ENCODE measurements at regions of chr2 and their contacts with region 1.

Region 1: GRCh38 chr2:203706403-203706802 is at the start of gene CD28:
- DNase-seq: peak; percentile 88
- H3K4me3 Mint-ChIP-seq: peak within 1 kb of the TSS; percentile 89
- H3K27ac Mint-ChIP-seq: peak within 1 kb of the TSS; percentile 100
- H3K4me1 Mint-ChIP-seq: peaks cover 57% of the 10 kb centered on the region
- H3K27me3 Mint-ChIP-seq: no peaks in the 10 kb centered on the region
- total RNA-seq, gene CD28: 53.6 and 59.3 TPM in 2 replicates

Region 2: GRCh38 chr2:203484266-203485112 is 221.9 kb before region 1 on chr2:
- intact Hi-C with region 1: loop called (anchors 5 kb)
- DNase-seq: peak; percentile 33
- H3K4me3 Mint-ChIP-seq: no peak overlapping the region
- H3K27ac Mint-ChIP-seq: no peak overlapping the region
- H3K4me1 Mint-ChIP-seq: peaks cover 6% of the 10 kb centered on the region
- H3K27me3 Mint-ChIP-seq: no peaks in the 10 kb centered on the region

Region 3: DNA sequence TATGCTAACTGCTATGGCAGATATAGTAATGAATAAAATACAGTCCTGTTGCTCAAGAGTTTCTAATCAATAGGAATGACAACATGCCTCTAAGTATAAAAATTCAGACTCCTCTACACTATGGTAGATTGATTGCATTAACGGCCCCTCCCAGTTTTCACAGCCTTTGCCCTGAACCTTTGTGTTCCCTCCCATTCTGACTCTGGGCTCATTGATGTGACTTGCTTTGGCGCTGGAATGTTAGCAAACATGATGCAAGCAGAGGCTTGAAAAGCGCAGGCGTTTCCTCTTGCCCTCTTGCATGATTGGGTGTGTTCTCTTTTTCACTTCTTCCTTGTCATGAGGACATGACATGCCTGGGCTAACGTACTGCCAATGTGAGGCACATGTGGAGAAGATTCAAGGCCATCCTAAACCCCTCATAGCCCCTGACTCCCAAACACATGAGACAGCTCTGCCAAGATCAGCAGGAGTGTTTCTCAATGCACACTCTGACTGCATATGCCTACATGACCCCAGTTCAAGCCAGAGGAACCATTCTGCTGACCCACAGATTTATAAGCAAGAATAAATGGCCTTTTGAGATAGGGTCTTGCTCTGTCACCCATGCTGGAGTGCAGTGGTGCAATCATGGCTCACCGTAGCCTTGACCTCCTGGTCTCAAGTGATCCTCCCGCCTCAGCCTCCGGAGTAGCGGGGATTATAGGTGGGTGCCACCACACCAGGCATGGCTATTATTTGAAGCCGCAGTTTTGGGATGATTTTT is 49.7 kb before region 1 on chr2:
- intact Hi-C with region 1: loop called (anchors 2 kb)
- DNase-seq: no peak
- H3K4me3 Mint-ChIP-seq: no peak overlapping the region
- H3K27ac Mint-ChIP-seq: no peak overlapping the region
- H3K4me1 Mint-ChIP-seq: peaks cover 38% of the 10 kb centered on the region
- H3K27me3 Mint-ChIP-seq: no peaks in the 10 kb centered on the region

Region 4: GRCh38 chr2:203718087-203718486 is 11.7 kb after region 1 on chr2:
- intact Hi-C with region 1: loop called (anchors 1 kb)
- DNase-seq: peak; percentile 66
- H3K4me3 Mint-ChIP-seq: peak overlapping the region; percentile 48
- H3K27ac Mint-ChIP-seq: peak overlapping the region; percentile 91
- H3K4me1 Mint-ChIP-seq: peaks cover 93% of the 10 kb centered on the region
- H3K27me3 Mint-ChIP-seq: no peaks in the 10 kb centered on the region

Region 5: GRCh38 chr2:203763938-203764664 is 57.7 kb after region 1 on chr2:
- intact Hi-C with region 1: loop called (anchors 1 kb)
- DNase-seq: no peak
- H3K4me3 Mint-ChIP-seq: no peak overlapping the region
- H3K27ac Mint-ChIP-seq: peak overlapping the region; percentile 86
- H3K4me1 Mint-ChIP-seq: peaks cover 51% of the 10 kb centered on the region
- H3K27me3 Mint-ChIP-seq: no peaks in the 10 kb centered on the region

Region 6: GRCh38 chr2:203830304-203831055 is 124.1 kb after region 1 on chr2:
- intact Hi-C with region 1: loop called (anchors 1 kb)
- DNase-seq: peak; percentile 36
- H3K4me3 Mint-ChIP-seq: peak overlapping the region; percentile 57
- H3K27ac Mint-ChIP-seq: peak overlapping the region; percentile 95
- H3K4me1 Mint-ChIP-seq: peaks cover 26% of the 10 kb centered on the region
- H3K27me3 Mint-ChIP-seq: no peaks in the 10 kb centered on the region

Region 7: DNA sequence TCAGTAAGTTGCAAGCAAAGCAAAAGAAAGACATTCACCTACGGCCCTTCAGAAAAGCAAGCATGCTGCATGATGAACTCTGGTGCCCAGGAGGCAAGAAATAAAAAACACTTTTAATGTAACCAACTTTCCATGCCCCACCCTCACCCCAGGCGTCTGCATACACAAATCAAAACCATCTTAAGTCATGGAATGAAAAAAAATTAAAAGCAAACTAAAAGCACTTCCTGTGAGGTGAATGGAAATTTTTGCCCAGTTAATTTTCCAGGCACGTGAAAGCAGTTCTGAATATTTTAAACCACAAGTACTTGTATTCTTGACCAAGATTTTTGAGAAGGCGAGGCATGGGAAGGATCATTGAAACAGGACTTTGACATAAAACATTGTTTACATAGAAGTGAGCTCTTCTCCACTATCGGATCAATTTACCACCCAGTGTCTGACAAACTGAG is 227.7 kb after region 1 on chr2:
- intact Hi-C with region 1: loop called (anchors 5 kb)
- DNase-seq: peak; percentile 59
- H3K4me3 Mint-ChIP-seq: peak overlapping the region; percentile 61
- H3K27ac Mint-ChIP-seq: peak overlapping the region; percentile 87
- H3K4me1 Mint-ChIP-seq: peaks cover 44% of the 10 kb centered on the region
- H3K27me3 Mint-ChIP-seq: no peaks in the 10 kb centered on the region

Measured in activated T-helper 2 cell treated with anti-CD3 and anti-CD28 coated beads, Interferon-gamma antibody, Interleukin-2, Interleukin-4, amounts not matched to agents 10 μg/mL and 5 μg/mL and 100 μg/mL, durations not matched to agents 14 hours and 24 hours and 36 hours (primary cell).